Activated naive CD4-positive, alpha-beta T cell treated with anti-CD3 and anti-CD28 coated beads for 36 hours (primary cell): ENCODE measurements at regions of chr18 and their contacts with region 1.

Region 1: DNA sequence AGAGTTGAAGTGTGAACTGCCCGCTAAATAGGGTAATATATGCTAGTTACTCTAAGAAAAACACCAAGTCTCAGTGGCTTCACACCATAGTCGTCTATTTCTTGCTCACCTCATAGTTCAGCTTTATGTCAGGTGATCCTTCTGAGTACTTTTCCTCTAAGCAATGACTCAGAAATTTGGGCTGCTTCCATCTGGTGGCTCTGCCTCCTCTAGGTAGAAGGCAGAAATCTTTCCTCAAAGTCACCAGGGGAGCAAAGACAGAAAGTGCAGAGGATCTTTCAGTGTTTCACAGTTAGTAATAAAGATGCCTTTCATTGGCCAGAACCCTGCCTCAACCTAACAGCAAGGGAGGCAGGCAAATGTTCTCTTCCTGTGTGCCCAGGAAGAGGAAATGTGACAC is 17.3 kb downstream of the CDH20 start:
- DNase-seq: no peak
- H3K4me3 Mint-ChIP-seq: no peak overlapping the region
- H3K27ac Mint-ChIP-seq: no peak overlapping the region
- H3K4me1 Mint-ChIP-seq: no peaks in the 10 kb centered on the region
- H3K27me3 Mint-ChIP-seq: peaks cover 5% of the 10 kb centered on the region

Region 2: GRCh38 chr18:62445386-62445917 is 1094.9 kb after region 1 on chr18:
- CTCF ChIA-PET with region 1: no interaction called
- intact Hi-C with region 1: loop called (anchors 10 kb)
- DNase-seq: peak; percentile 18
- H3K4me3 Mint-ChIP-seq: no peak overlapping the region
- H3K27ac Mint-ChIP-seq: no peak overlapping the region
- H3K4me1 Mint-ChIP-seq: no peaks in the 10 kb centered on the region
- H3K27me3 Mint-ChIP-seq: no peaks in the 10 kb centered on the region